ENCODE measurements at regions of chr9 and their contacts with region 1.

Region 1: GRCh38 chr9:135864447-135865049 is 42.8 kb downstream of the CAMSAP1 start:
- H3K4me3 ChIP-seq: no peak overlapping the region
- H3K27ac ChIP-seq: no peak overlapping the region
- H3K4me1 ChIP-seq: no peaks in the 10 kb centered on the region
- CTCF ChIP-seq: peak; percentile 54; the same call in 1 of the 2 replicates

Region 2: GRCh38 chr9:135077497-135078200 is 786.9 kb before region 1 on chr9:
- CTCF ChIA-PET with region 1: no interaction called
- POLR2A ChIA-PET with region 1: interaction called, 10 read pairs
- H3K4me3 ChIP-seq: no peak overlapping the region
- H3K27ac ChIP-seq: no peak overlapping the region
- H3K4me1 ChIP-seq: no peaks in the 10 kb centered on the region
- CTCF ChIP-seq: no peak

Region 3: DNA sequence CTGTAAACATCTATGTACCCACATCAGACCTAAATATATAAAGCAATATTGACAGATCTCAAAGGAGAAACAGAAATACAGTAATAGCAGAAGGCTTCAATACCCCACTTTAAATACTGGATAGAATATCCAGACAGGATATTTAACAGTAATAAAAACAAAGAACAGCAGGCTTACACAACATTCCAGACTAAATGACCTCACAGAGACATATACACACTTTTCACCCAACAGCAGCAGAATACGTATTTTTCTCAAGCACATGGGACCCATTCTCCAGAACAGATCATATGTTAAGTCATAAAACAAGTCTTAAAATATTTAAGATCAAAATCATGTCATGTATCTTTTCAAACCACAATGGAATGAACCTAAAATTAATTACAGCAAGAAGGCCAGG is 34.1 kb before region 1 on chr9:
- CTCF ChIA-PET with region 1: interaction called, 14 read pairs
- POLR2A ChIA-PET with region 1: no interaction called
- H3K4me3 ChIP-seq: no peak overlapping the region
- H3K27ac ChIP-seq: no peak overlapping the region
- H3K4me1 ChIP-seq: no peaks in the 10 kb centered on the region
- CTCF ChIP-seq: no peak

Region 4: DNA sequence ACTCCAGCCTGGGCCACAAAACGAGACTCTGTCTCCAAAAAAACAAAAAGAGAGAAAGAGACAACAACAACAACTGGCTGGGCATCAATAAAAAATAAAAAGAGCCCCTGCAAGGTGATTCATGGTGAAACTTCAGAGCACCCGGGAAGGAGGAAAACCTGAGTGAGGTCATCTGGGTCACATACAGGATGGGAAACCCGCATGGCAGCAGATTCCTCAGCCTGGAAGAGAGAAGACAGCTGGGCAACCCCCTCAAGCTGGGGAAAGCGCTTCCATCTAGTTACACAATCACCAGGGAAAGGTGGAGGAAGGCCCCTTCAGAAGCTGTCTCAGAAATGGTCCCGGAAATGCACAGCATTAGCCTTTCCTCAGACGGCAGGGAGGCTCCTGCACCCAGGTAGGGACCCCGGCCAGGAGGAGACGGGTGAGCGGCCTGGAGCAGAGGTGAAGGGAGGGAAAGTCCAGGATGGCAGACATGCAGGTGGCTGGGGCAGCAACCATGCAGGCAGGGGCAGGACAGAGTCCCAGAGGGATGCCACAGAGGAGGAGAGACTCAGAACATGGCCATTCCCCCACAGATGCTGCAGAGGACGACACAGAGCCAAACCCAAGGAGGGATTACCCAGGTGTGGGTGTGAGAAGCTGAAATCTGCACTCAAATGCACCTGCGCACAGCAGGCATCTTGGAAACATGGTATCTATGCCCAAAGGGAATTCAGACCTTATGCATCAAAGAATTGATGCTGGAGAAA is 13.4 kb after region 1 on chr9:
- CTCF ChIA-PET with region 1: interaction called, 16 read pairs
- POLR2A ChIA-PET with region 1: no interaction called
- H3K4me3 ChIP-seq: no peak overlapping the region
- H3K27ac ChIP-seq: no peak overlapping the region
- H3K4me1 ChIP-seq: peaks cover 3% of the 10 kb centered on the region; the same call in 1 of the 2 replicates
- CTCF ChIP-seq: no peak